Mammary epithelial cell (primary cell): ENCODE measurements at regions of chr9 and their contacts with region 1.

Region 1: DNA sequence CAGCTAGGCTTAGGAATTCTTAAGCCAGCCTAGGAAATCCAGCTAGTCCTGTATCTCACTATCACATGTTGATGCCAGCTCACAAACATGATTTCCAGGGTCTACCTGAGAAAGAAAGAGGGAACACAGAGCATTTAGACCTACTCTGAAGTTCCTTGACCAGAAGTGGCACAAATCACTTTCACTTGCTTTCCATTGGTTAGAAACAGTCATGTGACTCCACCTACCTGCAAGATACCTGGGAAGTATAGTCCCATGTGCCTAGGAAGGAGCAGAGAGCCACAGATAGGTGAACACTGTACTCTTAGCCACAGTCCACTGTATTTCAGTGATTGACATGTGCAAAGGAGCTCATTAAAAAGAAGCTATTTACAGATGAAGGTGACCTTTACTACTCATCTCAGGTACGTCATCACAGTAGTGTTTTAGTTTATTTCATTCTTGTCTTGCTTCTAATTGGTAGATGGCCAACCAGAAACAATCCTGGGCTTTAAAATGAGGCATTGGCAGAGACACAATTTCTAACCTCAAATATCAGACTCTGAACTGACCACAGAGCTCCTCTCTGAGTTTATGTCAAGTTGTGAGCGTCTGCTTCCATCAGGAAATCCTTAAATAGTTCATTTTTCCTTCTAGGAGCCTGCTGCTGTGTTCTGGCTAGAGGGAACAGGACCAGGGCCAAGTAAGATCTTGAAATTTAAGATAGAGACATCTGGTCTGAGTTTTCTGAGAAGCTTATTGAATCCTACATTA is 340.7 kb downstream of the TLE4 start:
- DNase-seq: no peak
- H3K4me3 ChIP-seq: no peak overlapping the region
- H3K27ac ChIP-seq: no peak overlapping the region
- H3K4me1 ChIP-seq: no peaks in the 10 kb centered on the region
- H3K27me3 ChIP-seq: no peaks in the 10 kb centered on the region
- CTCF ChIP-seq: no peak

Region 2: GRCh38 chr9:79776596-79776995 is 135.9 kb before region 1 on chr9:
- CTCF ChIA-PET with region 1: no interaction called
- dilution Hi-C with region 1: no loop called
- in situ Hi-C with region 1: no loop called
- intact Hi-C with region 1: no loop called
- DNase-seq: peak; percentile 43
- H3K4me3 ChIP-seq: no peak overlapping the region
- H3K27ac ChIP-seq: no peak overlapping the region
- H3K4me1 ChIP-seq: no peaks in the 10 kb centered on the region
- H3K27me3 ChIP-seq: no peaks in the 10 kb centered on the region
- CTCF ChIP-seq: no peak

Region 3: DNA sequence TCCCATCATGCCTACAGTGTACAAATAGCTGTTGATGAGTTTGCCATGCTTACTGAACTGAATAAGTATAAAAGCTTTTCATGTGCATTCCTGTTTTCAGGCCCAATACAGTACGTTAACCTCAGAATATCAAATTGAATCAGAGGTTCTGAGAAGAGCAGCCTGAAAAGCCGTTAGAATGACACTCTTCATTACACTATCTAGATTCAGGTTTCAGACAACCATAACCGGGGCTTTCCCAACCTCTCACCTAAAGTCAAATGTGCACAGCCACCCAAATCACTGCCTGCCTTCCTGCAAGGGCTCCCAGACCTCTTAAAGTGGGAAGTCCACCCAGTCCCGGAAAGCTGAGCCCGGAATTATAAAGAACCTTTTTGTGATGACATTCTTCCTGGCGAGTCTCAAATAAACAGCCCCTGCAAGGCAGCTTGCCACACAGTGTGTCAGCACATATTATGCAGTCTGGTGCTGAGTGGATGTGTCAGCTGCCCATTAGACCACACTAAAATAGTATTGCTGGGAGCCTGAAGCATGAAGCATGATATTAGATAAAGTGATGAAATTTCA is 95.0 kb before region 1 on chr9:
- CTCF ChIA-PET with region 1: no interaction called
- dilution Hi-C with region 1: loop called (anchors 25 kb)
- in situ Hi-C with region 1: no loop called
- intact Hi-C with region 1: no loop called
- DNase-seq: no peak
- H3K4me3 ChIP-seq: no peak overlapping the region
- H3K27ac ChIP-seq: no peak overlapping the region
- H3K4me1 ChIP-seq: no peaks in the 10 kb centered on the region
- H3K27me3 ChIP-seq: no peaks in the 10 kb centered on the region
- CTCF ChIP-seq: no peak